Heart right ventricle (tissue), 16 donors: ENCODE measurements at regions of chr2 and their contacts with region 1.

Region 1: DNA sequence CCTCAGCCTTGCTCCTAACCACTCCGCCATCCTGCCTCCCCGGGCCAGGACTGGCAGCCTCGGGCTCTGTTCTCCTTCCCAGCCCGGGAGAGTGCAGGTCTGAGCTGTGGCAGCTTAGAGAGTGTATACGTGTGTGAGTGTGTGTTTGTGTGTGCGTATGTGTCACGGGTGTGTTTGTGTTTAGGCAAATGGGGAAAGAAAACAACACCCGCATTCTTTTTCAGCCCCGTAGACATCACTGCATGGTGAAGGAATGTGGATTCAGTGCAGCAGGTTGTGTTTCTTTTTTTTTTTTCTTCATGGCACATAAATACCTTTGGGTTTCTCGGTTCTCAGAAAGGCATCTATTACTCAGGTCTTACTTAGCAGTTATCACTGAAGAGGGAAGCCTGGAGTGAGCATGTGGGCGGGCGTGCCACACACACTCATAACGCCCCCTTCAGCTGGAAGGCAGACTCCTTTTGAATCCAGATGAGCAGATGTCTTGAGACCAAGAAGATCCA is 44.2 kb downstream of the GLI2 start:
- DNase-seq: peak in 1 of 2 donors; percentile 1
- ATAC-seq: no peak
- H3K4me3 ChIP-seq: no peak overlapping the region
- H3K27ac ChIP-seq: no peak overlapping the region
- H3K4me1 ChIP-seq: peaks cover 0 to 19% (median 10%) of the 10 kb centered on the region in 9 donors
- H3K27me3 ChIP-seq: peaks cover 0 to 32% (median 6%) of the 10 kb centered on the region in 7 donors
- CTCF ChIP-seq: no peak

Region 2: GRCh38 chr2:120596990-120597594 is 182.7 kb before region 1 on chr2:
- intact Hi-C with region 1: no loop called
- DNase-seq: peak; percentile 41 to 53
- ATAC-seq: peak; percentile 44 to 82 (median 76)
- H3K4me3 ChIP-seq: no peak overlapping the region
- H3K27ac ChIP-seq: peak overlapping the region in 7 of 10 donors; percentile 28 to 80 (median 68)
- H3K4me1 ChIP-seq: peaks cover 6 to 41% (median 27%) of the 10 kb centered on the region in 9 donors
- H3K27me3 ChIP-seq: peaks cover 0 to 3% (median 0%) of the 10 kb centered on the region in 7 donors
- CTCF ChIP-seq: no peak

Region 3: DNA sequence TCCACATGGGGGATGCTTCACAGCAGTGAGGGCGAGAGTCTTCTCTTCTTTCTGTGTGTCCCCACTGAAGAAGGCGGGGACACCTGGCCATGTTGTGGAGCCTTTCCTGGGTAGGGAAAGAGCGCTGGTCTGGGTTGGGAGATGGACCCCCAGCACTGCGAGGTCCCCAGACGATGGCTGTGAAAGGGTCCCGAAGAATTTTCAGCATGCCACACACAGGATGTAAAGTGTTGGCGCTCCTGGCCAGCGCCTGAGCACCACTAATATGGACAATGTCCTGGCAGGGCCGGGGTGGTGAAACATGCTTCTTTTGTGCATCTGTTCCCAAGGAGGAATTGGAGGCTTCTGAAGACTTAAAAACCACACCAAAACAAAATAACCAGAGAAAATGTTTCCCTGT is 33.0 kb after region 1 on chr2:
- intact Hi-C with region 1: loop called in 1 of 10 experiments (anchors 1 kb)
- DNase-seq: no peak
- ATAC-seq: no peak
- H3K4me3 ChIP-seq: no peak overlapping the region
- H3K27ac ChIP-seq: no peak overlapping the region
- H3K4me1 ChIP-seq: no peaks in the 10 kb centered on the region
- H3K27me3 ChIP-seq: peaks cover 0 to 22% (median 4%) of the 10 kb centered on the region in 7 donors
- CTCF ChIP-seq: no peak